WTC11 (cell line): ENCODE measurements at regions of chr3 and their contacts with region 1.

Region 1: GRCh38 chr3:11060500-11061251 is 68.1 kb downstream of the SLC6A1 start:
- DNase-seq: peak; percentile 80
- ATAC-seq: peak; percentile 87
- H3K4me3 Mint-ChIP-seq: peak overlapping the region; percentile 60
- H3K27ac Mint-ChIP-seq: no peak overlapping the region
- H3K4me1 Mint-ChIP-seq: no peaks in the 10 kb centered on the region
- H3K27me3 Mint-ChIP-seq: peaks cover 35% of the 10 kb centered on the region
- CTCF ChIP-seq: peak; percentile 82

Region 2: GRCh38 chr3:10732292-10732691 is 328.4 kb before region 1 on chr3:
- CTCF ChIA-PET with region 1: no interaction called
- POLR2A ChIA-PET with region 1: no interaction called
- DNase-seq: no peak
- ATAC-seq: no peak
- H3K4me3 Mint-ChIP-seq: no peak overlapping the region
- H3K27ac Mint-ChIP-seq: no peak overlapping the region
- H3K4me1 Mint-ChIP-seq: peaks cover 4% of the 10 kb centered on the region; the same call in 1 of the 2 replicates
- H3K27me3 Mint-ChIP-seq: peaks cover 18% of the 10 kb centered on the region
- CTCF ChIP-seq: no peak

Region 3: GRCh38 chr3:10772271-10773161 is 288.2 kb before region 1 on chr3:
- CTCF ChIA-PET with region 1: interaction called, 32 read pairs
- POLR2A ChIA-PET with region 1: no interaction called
- DNase-seq: peak; percentile 81
- ATAC-seq: peak; percentile 98
- H3K4me3 Mint-ChIP-seq: no peak overlapping the region
- H3K27ac Mint-ChIP-seq: no peak overlapping the region
- H3K4me1 Mint-ChIP-seq: no peaks in the 10 kb centered on the region
- H3K27me3 Mint-ChIP-seq: peaks cover 22% of the 10 kb centered on the region
- CTCF ChIP-seq: peak; percentile 38

Region 4: DNA sequence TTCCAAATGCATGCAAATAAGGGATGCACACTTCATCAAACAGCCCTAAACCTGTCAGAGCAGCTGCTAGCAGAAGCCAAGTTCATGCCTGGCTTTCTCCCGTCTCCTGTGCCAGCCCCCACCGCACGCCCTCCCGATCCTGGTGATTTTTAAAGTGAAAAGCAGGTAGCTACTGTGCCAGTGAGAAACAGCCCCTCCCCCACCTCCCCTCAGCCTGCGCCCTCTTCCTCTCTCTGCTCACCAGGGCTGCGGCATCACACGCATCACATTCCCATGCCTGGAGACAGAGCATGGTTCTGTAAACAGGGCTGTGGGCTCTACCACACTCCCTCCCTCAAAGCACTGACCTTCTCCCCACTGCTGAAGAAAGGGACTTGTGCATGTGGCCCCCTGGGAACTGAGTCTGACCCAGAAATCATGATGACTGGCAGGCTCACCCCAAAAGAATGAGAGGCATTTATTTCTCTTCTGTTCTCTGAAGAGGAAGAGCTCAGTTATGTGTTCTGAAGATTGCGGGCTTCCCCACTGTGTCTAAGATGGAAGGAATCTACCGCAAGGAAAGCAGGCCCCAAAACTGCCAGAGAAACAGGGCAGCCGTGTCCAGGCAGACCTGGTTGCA is 82.7 kb before region 1 on chr3:
- CTCF ChIA-PET with region 1: interaction called, 14 read pairs
- POLR2A ChIA-PET with region 1: no interaction called
- DNase-seq: peak; percentile 45
- ATAC-seq: peak; percentile 92
- H3K4me3 Mint-ChIP-seq: peak overlapping the region; percentile 4; the same call in 1 of the 2 replicates
- H3K27ac Mint-ChIP-seq: peak overlapping the region; percentile 54
- H3K4me1 Mint-ChIP-seq: peaks cover 24% of the 10 kb centered on the region
- H3K27me3 Mint-ChIP-seq: peaks cover 21% of the 10 kb centered on the region
- CTCF ChIP-seq: no peak

Region 5: DNA sequence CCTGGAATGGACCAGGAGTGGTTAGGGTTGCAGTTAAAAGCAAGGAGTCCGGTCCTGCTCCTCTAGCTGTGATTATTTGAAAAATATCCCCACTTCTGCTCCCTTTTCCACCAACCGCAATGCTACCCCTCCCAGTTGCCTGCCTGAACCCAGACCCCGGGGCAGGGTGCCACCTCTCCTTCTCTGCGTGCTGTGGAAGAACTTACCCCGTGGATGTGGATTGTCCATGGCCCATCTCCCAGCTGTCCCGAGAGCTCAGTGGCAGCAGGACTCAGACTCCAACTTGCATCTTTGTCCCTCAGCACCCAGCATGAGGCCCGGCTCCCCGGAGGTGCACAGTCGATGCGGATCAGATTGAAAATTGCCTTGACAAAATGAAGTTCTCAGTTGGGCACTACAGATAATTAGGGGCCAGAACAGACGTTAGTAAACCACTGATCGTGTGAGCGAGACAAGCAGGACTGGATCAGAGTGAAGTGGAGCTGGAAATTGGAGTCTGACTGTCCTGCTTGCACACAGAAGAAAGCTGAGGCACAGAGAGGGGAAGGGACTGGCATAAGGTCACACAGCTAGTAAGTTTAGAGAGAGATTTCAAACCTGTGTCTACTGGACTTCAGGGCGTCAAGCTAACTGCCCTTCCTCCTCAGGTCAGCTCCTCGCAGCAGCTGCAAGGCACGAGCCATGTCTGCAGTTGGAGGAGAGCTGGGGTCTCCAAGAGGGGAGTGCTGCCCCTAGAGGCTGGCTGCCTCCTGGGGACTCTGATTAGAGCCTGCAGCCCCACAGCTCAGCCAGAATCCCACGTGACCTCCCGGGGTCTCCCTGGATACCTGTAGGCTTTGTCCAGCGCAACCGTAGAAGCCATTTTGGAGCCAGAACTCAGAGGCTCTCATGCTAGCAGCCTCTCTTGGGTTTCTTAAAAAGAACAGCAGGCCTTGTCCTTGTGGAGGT is 53.4 kb before region 1 on chr3:
- CTCF ChIA-PET with region 1: interaction called, 27 read pairs
- POLR2A ChIA-PET with region 1: no interaction called
- DNase-seq: peak; percentile 64
- ATAC-seq: peak; percentile 87
- H3K4me3 Mint-ChIP-seq: no peak overlapping the region
- H3K27ac Mint-ChIP-seq: no peak overlapping the region
- H3K4me1 Mint-ChIP-seq: peaks cover 18% of the 10 kb centered on the region
- H3K27me3 Mint-ChIP-seq: peaks cover 3% of the 10 kb centered on the region
- CTCF ChIP-seq: peak; percentile 10; the same call in 1 of the 2 replicates

Region 6: DNA sequence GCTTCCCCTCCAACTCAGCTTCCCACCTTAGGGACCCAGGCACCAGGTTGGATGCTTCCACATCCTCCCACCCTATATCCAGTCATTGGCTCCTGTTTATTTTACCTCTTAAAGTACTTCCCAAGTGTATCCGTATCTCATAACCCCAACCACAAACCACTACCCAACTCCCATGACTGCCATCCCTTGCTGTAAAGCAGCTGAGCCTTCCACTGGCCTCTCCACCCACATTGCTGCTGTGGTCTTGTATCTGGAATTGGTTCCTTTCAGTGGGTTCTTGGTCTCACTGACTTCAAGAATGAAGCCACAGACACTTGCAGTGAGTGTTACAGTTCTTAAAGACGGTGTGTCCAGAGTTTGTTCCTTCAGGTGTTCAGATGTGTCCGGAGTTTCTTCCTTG is 13.8 kb after region 1 on chr3:
- CTCF ChIA-PET with region 1: interaction called, 11 read pairs
- POLR2A ChIA-PET with region 1: no interaction called
- DNase-seq: no peak
- ATAC-seq: no peak
- H3K4me3 Mint-ChIP-seq: no peak overlapping the region
- H3K27ac Mint-ChIP-seq: no peak overlapping the region
- H3K4me1 Mint-ChIP-seq: no peaks in the 10 kb centered on the region
- H3K27me3 Mint-ChIP-seq: peaks cover 11% of the 10 kb centered on the region
- CTCF ChIP-seq: no peak

Region 7: DNA sequence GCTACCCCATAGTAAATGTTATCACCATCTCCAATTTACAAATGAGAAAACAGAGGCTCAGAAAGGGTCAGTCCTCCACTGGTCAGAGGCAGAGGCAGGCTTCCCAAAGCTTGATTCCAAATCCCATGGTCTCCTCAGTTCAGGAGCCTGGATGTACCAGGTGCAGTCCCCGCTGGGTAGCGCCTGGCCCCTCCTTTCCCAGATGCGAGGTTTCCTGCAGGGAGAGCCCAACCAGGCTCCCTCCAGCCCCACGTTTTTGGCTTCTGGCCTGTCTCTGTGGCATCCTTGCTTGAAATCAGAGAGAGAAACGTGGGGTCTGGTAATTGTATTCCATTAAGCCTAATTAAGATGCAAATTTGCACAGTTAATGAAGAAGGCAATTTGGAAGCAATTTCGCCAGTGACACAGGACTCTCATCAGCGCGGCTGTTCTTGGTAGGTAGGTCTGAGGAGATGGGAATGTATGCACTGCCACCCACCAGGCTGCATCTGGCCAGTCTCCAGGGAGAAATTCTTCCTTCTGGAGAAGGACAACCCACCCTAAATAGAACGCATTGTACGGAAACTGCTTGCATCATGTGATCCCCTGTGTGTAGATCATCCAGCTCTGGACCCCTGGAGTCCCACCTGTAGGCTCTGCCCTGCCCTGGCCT is 144.1 kb after region 1 on chr3:
- CTCF ChIA-PET with region 1: interaction called, 39 read pairs
- POLR2A ChIA-PET with region 1: no interaction called
- DNase-seq: no peak
- ATAC-seq: no peak
- H3K4me3 Mint-ChIP-seq: no peak overlapping the region
- H3K27ac Mint-ChIP-seq: no peak overlapping the region
- H3K4me1 Mint-ChIP-seq: peaks cover 9% of the 10 kb centered on the region
- H3K27me3 Mint-ChIP-seq: no peaks in the 10 kb centered on the region
- CTCF ChIP-seq: no peak

Region 8: GRCh38 chr3:11445883-11446282 is 385.2 kb after region 1 on chr3:
- CTCF ChIA-PET with region 1: no interaction called
- POLR2A ChIA-PET with region 1: no interaction called
- DNase-seq: no peak
- ATAC-seq: no peak
- H3K4me3 Mint-ChIP-seq: no peak overlapping the region
- H3K27ac Mint-ChIP-seq: no peak overlapping the region
- H3K4me1 Mint-ChIP-seq: no peaks in the 10 kb centered on the region
- H3K27me3 Mint-ChIP-seq: no peaks in the 10 kb centered on the region
- CTCF ChIP-seq: no peak

Region 9: GRCh38 chr3:11548721-11549131 is 488.1 kb after region 1 on chr3:
- CTCF ChIA-PET with region 1: no interaction called
- POLR2A ChIA-PET with region 1: no interaction called
- DNase-seq: no peak
- ATAC-seq: no peak
- H3K4me3 Mint-ChIP-seq: no peak overlapping the region
- H3K27ac Mint-ChIP-seq: no peak overlapping the region
- H3K4me1 Mint-ChIP-seq: no peaks in the 10 kb centered on the region
- H3K27me3 Mint-ChIP-seq: no peaks in the 10 kb centered on the region; the same call in 1 of the 2 replicates
- CTCF ChIP-seq: no peak